Posterior cingulate gyrus (tissue), 11 donors: ENCODE measurements at regions of chr3 and their contacts with region 1.

Region 1: DNA sequence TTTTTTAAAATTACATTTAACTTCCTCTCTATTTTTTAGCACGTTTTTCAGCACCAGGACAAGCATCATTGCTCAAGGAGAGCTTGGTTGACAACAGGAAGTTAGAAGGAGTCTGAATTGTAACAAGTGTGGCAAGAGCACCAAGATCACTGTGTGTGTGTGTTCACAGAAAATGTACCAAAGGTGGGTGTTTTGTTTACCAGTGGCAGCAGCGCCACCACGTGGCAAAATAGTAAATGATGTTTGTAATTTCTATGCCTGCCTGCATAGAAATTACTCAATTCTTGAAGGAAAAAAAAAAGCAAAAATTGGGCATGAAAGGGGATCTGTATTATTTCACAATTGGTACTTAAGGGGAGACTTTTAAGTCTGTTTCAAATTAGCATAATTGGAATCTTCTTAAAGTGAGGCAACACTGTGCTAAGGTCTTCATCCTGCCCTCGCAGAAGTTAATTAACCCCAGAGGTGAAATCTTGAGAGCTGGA is 7.4 kb upstream of the U2SURP start:
- DNase-seq: peak in 7 of 10 donors; percentile 48 to 90 (median 63)

Region 2: DNA sequence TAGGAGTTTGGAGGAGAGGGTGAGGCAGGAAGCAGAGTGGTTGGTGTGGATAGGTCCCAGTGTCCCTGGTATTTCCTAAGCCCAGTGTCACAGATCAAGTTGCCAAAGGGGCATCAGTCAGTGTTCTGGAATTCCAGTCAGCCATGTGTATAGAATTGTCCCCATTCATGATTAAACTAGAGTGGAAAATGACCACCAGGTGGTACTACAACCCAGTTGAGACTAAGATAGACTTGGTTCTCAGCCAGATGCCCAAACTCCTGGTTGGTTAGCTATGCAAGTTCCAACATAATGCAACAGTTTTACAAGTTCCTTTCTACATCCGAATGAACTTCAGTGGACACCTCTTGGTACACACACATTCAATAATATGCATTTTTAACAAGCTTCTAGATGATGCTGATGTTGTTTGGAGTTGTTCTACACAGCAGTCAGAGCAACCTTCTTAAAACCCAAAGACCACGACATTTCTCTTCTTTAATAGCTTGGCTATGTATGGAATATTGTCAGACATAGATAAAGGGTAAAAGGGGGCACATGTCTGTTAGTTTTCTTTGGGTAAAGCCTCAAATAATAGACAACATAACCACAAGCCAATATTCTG is 407.1 kb before region 1 on chr3:
- intact Hi-C with region 1: loop called (anchors 2 kb)
- DNase-seq: peak in 2 of 10 donors; percentile 13

Region 3: DNA sequence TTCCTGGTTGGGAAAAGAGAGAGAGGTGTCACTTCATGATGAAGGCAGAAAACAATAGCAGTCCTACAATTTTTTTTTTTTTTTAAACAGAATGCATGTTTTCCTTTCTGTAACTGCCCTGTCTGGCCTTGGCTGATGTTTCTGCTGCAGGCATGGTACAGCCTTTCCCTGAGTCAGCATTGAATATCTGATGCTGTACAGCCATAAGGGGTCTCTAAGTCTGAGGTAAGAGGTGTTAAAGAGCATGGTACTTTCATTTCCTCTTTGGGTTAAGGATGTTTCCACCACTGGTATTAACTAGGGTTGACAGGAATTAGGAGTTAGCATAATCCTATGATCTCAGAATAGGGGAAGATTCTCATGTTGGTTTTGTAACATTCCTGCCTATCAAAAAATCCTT is 272.9 kb after region 1 on chr3:
- intact Hi-C with region 1: no loop called
- DNase-seq: no peak